ENCODE measurements at regions of chr9 and their contacts with region 1.

Region 1: GRCh38 chr9:133955821-133956411 is 36.2 kb downstream of the VAV2 start:
- DNase-seq: peak; percentile 72
- ATAC-seq: peak; percentile 48
- H3K4me3 ChIP-seq: peak overlapping the region; percentile 25 to 69 (median 51)
- H3K4me3 Mint-ChIP-seq: peak overlapping the region; percentile 83
- H3K27ac ChIP-seq: peak overlapping the region; percentile 93 to 94
- H3K27ac Mint-ChIP-seq: peak overlapping the region; percentile 98
- H3K4me1 ChIP-seq: peaks cover 66 to 72% of the 10 kb centered on the region in 2 donors
- H3K4me1 Mint-ChIP-seq: peaks cover 67% of the 10 kb centered on the region
- H3K27me3 ChIP-seq: no peaks in the 10 kb centered on the region
- H3K27me3 Mint-ChIP-seq: no peaks in the 10 kb centered on the region
- CTCF ChIP-seq: no peak

Region 2: DNA sequence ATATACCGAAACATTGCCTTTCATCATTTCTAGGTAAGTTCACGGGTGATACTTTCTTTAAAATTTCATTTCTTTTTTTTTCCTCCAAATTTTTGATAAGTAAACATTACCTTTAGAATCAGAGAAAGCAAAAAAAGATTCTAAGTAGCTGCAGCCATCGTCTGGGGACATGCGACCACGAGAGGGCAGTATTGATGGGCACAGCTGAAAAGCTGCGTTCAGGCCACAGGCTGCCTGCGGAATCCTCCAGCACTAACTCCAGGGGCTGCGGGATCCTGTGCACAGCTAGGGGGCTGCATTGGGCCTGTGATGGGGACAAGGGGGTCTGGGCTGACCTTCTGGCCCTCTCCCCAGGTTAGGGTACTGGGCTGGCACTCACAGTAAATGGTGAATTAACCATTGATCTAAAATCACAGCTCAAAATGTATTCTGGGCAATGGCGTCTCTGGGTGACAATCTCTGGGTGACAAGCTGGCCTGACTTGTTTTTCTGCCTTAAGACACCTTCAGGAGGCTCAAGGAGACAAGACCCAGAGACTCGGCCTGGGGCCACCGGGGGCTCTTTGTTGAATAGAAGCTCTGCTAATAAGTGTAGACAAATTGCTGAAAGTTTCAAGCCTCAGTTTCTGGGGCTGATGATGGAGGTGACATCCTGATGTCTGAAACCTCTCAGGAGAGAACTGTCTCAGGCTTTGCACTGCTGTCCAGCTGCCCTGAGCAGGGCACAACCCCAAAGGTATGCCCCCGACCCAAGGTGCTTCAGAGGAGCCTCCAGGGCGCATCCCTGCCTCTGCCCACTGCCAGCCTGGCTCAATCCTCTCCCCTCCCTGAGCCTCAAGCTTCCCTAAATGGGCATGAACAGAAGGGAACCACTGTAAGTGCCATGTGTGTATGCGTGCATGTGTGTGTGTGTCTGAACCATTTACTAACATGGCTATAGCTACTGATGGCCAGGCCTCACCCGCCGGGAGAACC is 173.5 kb before region 1 on chr9:
- CTCF ChIA-PET with region 1: interaction called, 10 read pairs
- POLR2A ChIA-PET with region 1: interaction called, 9 read pairs
- intact Hi-C with region 1: loop called (anchors 2 kb)
- DNase-seq: peak; percentile 85
- ATAC-seq: peak; percentile 16
- H3K4me3 ChIP-seq: no peak overlapping the region
- H3K4me3 Mint-ChIP-seq: peak overlapping the region; percentile 59
- H3K27ac ChIP-seq: peak overlapping the region; percentile 2 to 59
- H3K27ac Mint-ChIP-seq: peak overlapping the region; percentile 82
- H3K4me1 ChIP-seq: peaks cover 54 to 62% of the 10 kb centered on the region in 2 donors
- H3K4me1 Mint-ChIP-seq: peaks cover 61% of the 10 kb centered on the region
- H3K27me3 ChIP-seq: no peaks in the 10 kb centered on the region
- H3K27me3 Mint-ChIP-seq: no peaks in the 10 kb centered on the region
- CTCF ChIP-seq: peak; percentile 85

Region 3: DNA sequence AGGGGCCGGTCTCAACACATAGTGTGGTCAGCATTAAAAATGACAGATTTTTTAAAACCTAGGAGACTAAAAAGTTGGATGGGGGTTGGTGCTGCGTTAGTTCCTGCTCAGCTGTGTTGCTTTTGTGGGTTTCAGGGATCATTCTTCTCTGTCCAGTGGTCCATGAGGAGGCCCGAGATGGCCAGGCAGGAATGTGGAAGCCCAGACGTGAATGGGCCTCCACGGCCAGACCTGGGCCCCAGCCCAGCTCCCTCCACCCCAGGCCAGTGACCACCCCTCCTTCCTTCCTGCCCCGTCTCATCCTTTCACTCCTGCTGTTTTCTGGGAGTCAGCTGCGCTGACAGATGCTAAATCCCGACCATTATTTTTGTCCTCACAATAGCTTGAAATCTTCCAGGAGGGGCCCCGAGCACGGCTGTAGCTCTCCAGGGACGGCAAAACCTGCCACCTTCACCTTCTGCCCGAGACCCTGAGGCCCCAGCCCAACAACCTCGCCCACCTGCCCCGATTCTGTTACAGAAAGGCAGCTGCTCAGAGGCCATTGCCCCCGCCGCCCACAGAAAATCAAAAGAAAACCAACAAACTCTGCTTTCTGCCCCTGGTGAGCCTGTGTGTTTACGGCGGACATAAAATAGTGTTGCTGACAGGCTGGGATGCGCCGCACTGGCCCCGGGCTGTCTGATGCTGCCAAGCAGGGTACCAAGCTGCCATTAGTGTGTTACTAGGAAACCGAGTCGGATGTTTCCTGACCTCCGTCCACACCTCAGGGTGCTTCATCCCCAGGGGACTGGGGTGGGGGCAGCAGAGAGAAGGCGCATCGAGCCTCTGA is 134.1 kb before region 1 on chr9:
- CTCF ChIA-PET with region 1: interaction called, 4 read pairs
- POLR2A ChIA-PET with region 1: no interaction called
- intact Hi-C with region 1: loop called (anchors 2 kb)
- DNase-seq: peak; percentile 83
- ATAC-seq: peak; percentile 56
- H3K4me3 ChIP-seq: peak overlapping the region in 4 of 5 experiments; percentile 31 to 63 (median 40)
- H3K4me3 Mint-ChIP-seq: peak overlapping the region; percentile 88
- H3K27ac ChIP-seq: peak overlapping the region; percentile 99
- H3K27ac Mint-ChIP-seq: peak overlapping the region; percentile 97
- H3K4me1 ChIP-seq: peaks cover 55 to 70% of the 10 kb centered on the region in 2 donors
- H3K4me1 Mint-ChIP-seq: peaks cover 81% of the 10 kb centered on the region
- H3K27me3 ChIP-seq: no peaks in the 10 kb centered on the region
- H3K27me3 Mint-ChIP-seq: no peaks in the 10 kb centered on the region
- CTCF ChIP-seq: no peak

Region 4: GRCh38 chr9:133916159-133916541 is 39.8 kb before region 1 on chr9:
- CTCF ChIA-PET with region 1: no interaction called
- POLR2A ChIA-PET with region 1: no interaction called
- intact Hi-C with region 1: no loop called
- DNase-seq: no peak
- ATAC-seq: no peak
- H3K4me3 ChIP-seq: no peak overlapping the region
- H3K4me3 Mint-ChIP-seq: no peak overlapping the region
- H3K27ac ChIP-seq: no peak overlapping the region
- H3K27ac Mint-ChIP-seq: peak overlapping the region; percentile 87
- H3K4me1 ChIP-seq: peaks cover 13 to 23% of the 10 kb centered on the region in 2 donors
- H3K4me1 Mint-ChIP-seq: peaks cover 58% of the 10 kb centered on the region
- H3K27me3 ChIP-seq: no peaks in the 10 kb centered on the region
- H3K27me3 Mint-ChIP-seq: no peaks in the 10 kb centered on the region
- CTCF ChIP-seq: no peak

Region 5: GRCh38 chr9:133945314-133945975 is 10.5 kb before region 1 on chr9:
- CTCF ChIA-PET with region 1: interaction called, 38 read pairs
- POLR2A ChIA-PET with region 1: interaction called, 40 read pairs
- intact Hi-C with region 1: loop called (anchors 1 kb)
- DNase-seq: peak; percentile 90
- ATAC-seq: peak; percentile 74
- H3K4me3 ChIP-seq: peak overlapping the region in 3 of 5 experiments; percentile 1 to 44 (median 25)
- H3K4me3 Mint-ChIP-seq: peak overlapping the region; percentile 89
- H3K27ac ChIP-seq: peak overlapping the region; percentile 75 to 83
- H3K27ac Mint-ChIP-seq: peak overlapping the region; percentile 97
- H3K4me1 ChIP-seq: peaks cover 34 to 64% of the 10 kb centered on the region in 2 donors
- H3K4me1 Mint-ChIP-seq: peaks cover 78% of the 10 kb centered on the region
- H3K27me3 ChIP-seq: no peaks in the 10 kb centered on the region
- H3K27me3 Mint-ChIP-seq: no peaks in the 10 kb centered on the region
- CTCF ChIP-seq: no peak

Region 6: GRCh38 chr9:134024828-134025605 is 69.1 kb after region 1 on chr9 and contains the start of gene BRD3OS:
- CTCF ChIA-PET with region 1: no interaction called
- POLR2A ChIA-PET with region 1: no interaction called
- intact Hi-C with region 1: loop called (anchors 2 kb)
- DNase-seq: peak; percentile 97
- ATAC-seq: peak; percentile 93
- H3K4me3 ChIP-seq: peak within 1 kb of the TSS; percentile 53 to 85 (median 76)
- H3K4me3 Mint-ChIP-seq: peak within 1 kb of the TSS; percentile 86
- H3K27ac ChIP-seq: peak within 1 kb of the TSS; percentile 34 to 69
- H3K27ac Mint-ChIP-seq: peak within 1 kb of the TSS; percentile 88
- H3K4me1 ChIP-seq: peaks cover 6 to 19% of the 10 kb centered on the region in 2 donors
- H3K4me1 Mint-ChIP-seq: peaks cover 11% of the 10 kb centered on the region
- H3K27me3 ChIP-seq: no peaks in the 10 kb centered on the region
- H3K27me3 Mint-ChIP-seq: no peaks in the 10 kb centered on the region
- CTCF ChIP-seq: no peak
- total RNA-seq, gene BRD3OS: 25.3 and 26.8 TPM in 2 replicates

Region 7: DNA sequence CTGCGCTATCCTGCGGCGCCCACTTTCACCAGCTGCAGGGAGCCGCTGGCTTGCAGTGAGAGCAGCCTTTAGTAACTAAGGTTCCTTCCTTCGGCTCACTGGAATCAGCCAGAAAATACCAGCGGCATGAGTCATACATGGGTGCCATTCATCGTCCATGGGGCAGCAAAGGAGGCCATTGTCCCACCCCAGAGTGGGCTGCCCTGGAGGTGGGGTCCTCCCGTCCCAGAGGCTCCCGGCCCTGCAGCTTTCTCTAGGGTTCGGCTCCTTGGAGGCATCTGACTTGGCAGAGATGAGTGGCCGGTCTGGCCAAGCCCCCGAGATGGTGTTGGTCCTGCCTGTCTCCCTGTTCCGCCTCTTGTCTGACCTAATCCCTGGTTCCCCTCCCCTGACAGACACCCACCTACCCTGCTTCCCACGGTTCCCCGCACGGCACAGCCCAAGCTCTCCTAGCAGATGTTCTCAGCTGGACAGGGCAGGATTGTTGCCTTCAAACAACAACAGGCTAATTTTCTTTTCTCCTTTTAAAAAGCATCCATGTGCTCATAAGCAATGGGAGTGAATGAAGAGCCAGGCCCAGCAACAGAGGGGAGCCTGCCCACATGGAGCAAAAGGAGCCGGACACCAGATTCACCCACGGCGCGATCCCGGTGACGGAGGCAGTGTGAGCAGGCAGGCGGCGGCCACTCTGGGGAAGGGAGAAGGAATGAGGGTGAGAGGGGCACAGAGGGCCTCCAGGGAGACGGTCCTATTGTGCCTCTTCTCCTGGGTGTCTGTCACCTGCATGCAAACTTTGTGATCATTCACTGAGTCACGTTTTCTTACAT is 588.7 kb after region 1 on chr9:
- CTCF ChIA-PET with region 1: no interaction called
- POLR2A ChIA-PET with region 1: no interaction called
- intact Hi-C with region 1: no loop called
- DNase-seq: no peak
- ATAC-seq: no peak
- H3K4me3 ChIP-seq: no peak overlapping the region
- H3K4me3 Mint-ChIP-seq: no peak overlapping the region
- H3K27ac ChIP-seq: no peak overlapping the region
- H3K27ac Mint-ChIP-seq: no peak overlapping the region
- H3K4me1 ChIP-seq: no peaks in the 10 kb centered on the region
- H3K4me1 Mint-ChIP-seq: no peaks in the 10 kb centered on the region
- H3K27me3 ChIP-seq: no peaks in the 10 kb centered on the region
- H3K27me3 Mint-ChIP-seq: no peaks in the 10 kb centered on the region
- CTCF ChIP-seq: no peak

Measured in B cell (primary cell).